Testis (tissue), 5 donors: ENCODE measurements at regions of chr5 and their contacts with region 1.

Region 1: DNA sequence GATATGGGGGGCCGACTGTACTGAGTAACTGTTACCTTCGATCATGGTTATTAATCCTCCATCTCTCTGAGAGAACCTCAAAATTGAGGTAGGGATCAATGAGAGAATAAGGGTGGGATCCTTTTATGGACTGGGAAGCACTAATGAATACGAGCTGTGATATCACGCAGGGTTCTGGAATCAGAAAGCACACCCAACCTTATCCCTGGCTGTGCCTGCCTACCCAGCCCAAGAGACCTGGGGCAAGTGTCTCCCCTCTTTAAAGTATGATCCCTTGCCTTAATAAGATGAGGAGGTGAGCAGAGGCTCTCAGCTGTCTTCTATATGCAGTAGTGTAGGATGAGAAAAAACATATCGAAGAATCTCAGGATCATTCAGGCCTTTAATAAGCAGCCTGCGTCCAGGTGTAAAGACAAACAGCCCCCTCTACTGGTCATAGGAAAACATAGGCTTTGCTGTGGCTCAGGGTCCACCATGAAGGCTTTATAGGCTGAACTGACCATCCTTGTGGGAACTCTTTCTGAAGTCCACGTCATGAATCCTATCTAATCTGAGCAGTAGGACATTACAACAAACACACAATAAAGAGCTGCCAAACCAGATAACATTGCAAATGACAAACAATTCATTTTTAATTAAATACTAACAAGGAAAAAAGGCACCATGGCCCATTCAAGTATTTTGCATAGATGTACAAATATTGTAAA is 16.8 kb downstream of the NIPAL4 start:
- DNase-seq: peak; percentile 67
- H3K4me3 ChIP-seq: no peak overlapping the region
- H3K27ac ChIP-seq: no peak overlapping the region
- H3K4me1 ChIP-seq: no peaks in the 10 kb centered on the region
- H3K27me3 ChIP-seq: no peaks in the 10 kb centered on the region
- CTCF ChIP-seq: peak; percentile 32 to 72 (median 56)
- POLR2A ChIP-seq: no peak

Region 2: DNA sequence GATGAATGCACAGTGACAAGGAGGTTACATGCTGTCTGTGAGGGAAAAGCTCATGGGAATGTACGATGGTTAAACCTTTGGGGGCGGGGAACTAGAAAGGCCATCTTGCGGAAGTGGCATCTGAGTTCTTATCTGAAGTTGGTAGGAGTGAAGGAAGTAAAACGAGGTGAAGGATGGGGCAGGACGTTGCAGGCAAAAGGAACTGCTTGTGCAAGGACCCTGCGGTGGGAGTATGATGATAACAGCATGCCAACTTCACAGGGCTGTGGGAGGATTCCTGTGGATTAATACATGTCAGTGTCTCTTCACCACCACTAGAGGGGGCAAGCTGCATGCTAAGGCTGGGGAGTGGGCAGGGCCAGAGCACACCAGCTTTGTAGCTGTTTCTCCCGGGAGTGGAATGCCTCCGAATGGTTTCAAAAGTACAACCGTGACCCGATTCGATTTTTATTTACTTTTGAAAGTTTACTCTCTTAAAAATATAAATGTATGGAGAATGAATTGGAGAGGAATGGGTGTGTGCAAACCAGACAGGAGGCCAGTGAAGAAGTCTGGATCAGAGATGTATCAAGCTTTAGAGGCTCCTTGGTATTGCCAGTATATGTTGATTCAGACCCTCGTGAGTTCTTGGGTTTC is 148.5 kb before region 1 on chr5:
- intact Hi-C with region 1: loop called (anchors 10 kb)
- DNase-seq: peak; percentile 76
- H3K4me3 ChIP-seq: no peak overlapping the region
- H3K27ac ChIP-seq: no peak overlapping the region
- H3K4me1 ChIP-seq: peaks cover 8% of the 10 kb centered on the region
- H3K27me3 ChIP-seq: no peaks in the 10 kb centered on the region
- CTCF ChIP-seq: peak; percentile 71 to 88 (median 77)
- POLR2A ChIP-seq: no peak